PC-9 (cell line): ENCODE measurements at regions of chr1 and their contacts with region 1.

Region 1: GRCh38 chr1:37655274-37655673 is 20.6 kb upstream of the RSPO1 start:
- DNase-seq: no peak
- H3K4me3 ChIP-seq: no peak overlapping the region
- H3K27ac ChIP-seq: no peak overlapping the region
- H3K4me1 ChIP-seq: no peaks in the 10 kb centered on the region
- H3K27me3 ChIP-seq: peaks cover 33% of the 10 kb centered on the region
- CTCF ChIP-seq: no peak

Region 2: DNA sequence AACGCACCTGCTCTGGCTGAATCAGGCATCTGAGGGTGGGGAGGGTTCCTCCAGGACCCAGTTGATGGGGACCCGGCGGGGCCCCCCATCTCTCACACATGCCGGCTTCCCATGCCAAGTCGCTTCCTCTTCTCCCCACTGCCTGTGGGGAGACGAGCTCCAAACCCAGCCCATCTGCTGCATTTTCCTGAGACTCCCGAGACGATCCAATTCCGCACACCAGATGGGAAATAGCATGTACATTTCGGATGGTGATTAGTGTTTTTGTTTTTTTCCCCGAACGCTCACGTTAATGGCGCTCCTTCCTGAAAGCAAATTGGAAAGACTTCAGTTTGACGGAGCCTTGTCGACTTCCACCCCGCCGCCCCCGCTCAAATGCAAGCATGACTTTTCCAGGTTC is 607.7 kb before region 1 on chr1:
- CTCF ChIA-PET with region 1: no interaction called
- POLR2A ChIA-PET with region 1: interaction called, 10 read pairs
- intact Hi-C with region 1: no loop called
- DNase-seq: no peak
- H3K4me3 ChIP-seq: no peak overlapping the region
- H3K27ac ChIP-seq: no peak overlapping the region
- H3K4me1 ChIP-seq: no peaks in the 10 kb centered on the region
- H3K27me3 ChIP-seq: peaks cover 59% of the 10 kb centered on the region
- CTCF ChIP-seq: no peak

Region 3: GRCh38 chr1:37434292-37434907 is 220.9 kb before region 1 on chr1:
- CTCF ChIA-PET with region 1: no interaction called
- POLR2A ChIA-PET with region 1: no interaction called
- intact Hi-C with region 1: no loop called
- DNase-seq: peak in 1 of 2 experiments; percentile 70
- H3K4me3 ChIP-seq: no peak overlapping the region
- H3K27ac ChIP-seq: no peak overlapping the region
- H3K4me1 ChIP-seq: no peaks in the 10 kb centered on the region
- H3K27me3 ChIP-seq: peaks cover 60% of the 10 kb centered on the region
- CTCF ChIP-seq: peak; percentile 98

Region 4: DNA sequence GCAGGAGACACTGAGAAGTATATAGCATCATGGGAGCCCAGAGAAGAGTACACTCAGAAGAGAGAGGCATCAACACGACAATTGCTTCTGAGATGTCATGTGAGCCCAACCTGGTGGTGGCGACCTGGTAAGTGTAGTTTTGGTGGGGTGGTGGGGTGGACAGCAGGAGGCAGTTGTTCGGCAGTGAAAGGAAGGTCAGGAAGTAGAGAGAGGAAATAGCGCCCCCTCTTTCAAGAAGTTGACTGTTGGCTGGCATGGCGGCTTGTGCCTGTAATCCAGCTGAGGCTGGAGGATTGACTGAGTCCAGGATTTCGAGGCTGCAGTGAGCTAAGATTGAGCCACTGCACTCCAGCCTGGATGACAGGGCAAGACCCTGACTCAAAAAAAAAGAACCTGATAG is 33.1 kb before region 1 on chr1:
- CTCF ChIA-PET with region 1: no interaction called
- POLR2A ChIA-PET with region 1: interaction called, 35 read pairs
- intact Hi-C with region 1: no loop called
- DNase-seq: no peak
- H3K4me3 ChIP-seq: no peak overlapping the region
- H3K27ac ChIP-seq: no peak overlapping the region
- H3K4me1 ChIP-seq: no peaks in the 10 kb centered on the region
- H3K27me3 ChIP-seq: peaks cover 85% of the 10 kb centered on the region
- CTCF ChIP-seq: no peak

Region 5: DNA sequence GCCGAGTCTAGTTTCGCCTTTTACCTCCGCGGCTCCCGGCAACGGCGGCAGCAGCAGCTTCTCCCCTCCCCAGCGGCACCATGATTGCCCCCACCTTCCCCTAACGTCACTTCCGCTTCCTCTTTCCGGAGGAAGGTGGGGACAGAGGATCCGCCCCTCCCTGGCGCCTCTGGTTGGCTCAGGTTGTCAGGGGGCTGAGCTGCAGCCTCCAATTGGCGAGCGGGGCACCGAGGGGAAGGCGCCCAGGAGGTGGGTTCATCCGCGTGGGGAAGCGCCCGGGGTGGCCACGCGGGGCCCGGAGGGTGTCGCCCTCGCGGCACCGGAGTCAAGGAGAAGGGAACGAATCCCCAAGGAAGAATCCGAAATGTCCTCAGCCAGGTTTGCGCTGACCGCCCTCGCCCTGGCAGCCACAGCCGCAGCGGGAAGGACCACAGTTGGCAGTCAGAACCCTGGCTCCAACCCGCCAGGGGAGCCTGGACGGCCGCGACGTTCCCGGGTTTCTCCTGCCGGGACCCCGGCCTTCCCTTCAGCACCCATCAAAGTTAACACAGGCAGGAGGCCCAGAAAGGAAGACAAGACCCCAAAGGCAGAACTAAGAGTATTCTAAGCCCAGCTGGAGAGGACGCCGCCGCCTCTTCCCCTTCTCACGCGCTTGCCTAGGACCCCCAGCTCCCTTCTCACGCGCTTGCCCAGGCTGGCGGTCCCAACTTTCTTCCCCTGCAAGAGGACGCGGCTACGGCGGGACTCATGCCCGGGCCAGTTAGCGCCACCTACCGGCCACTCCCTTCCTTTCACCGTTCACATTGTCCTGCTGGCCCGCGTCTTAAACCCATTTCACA is 204.5 kb after region 1 on chr1 and contains the start of gene MTF1:
- CTCF ChIA-PET with region 1: no interaction called
- POLR2A ChIA-PET with region 1: no interaction called
- intact Hi-C with region 1: no loop called
- DNase-seq: peak; percentile 91 to 97
- H3K4me3 ChIP-seq: peak within 1 kb of the TSS; percentile 76
- H3K27ac ChIP-seq: peak within 1 kb of the TSS; percentile 91
- H3K4me1 ChIP-seq: peaks cover 31% of the 10 kb centered on the region
- H3K27me3 ChIP-seq: no peaks in the 10 kb centered on the region
- CTCF ChIP-seq: peak; percentile 92
- total RNA-seq, gene MTF1: 22.1 and 22.5 TPM in 2 replicates